ENCODE measurements at regions of chr3 and their contacts with region 1.

Region 1: DNA sequence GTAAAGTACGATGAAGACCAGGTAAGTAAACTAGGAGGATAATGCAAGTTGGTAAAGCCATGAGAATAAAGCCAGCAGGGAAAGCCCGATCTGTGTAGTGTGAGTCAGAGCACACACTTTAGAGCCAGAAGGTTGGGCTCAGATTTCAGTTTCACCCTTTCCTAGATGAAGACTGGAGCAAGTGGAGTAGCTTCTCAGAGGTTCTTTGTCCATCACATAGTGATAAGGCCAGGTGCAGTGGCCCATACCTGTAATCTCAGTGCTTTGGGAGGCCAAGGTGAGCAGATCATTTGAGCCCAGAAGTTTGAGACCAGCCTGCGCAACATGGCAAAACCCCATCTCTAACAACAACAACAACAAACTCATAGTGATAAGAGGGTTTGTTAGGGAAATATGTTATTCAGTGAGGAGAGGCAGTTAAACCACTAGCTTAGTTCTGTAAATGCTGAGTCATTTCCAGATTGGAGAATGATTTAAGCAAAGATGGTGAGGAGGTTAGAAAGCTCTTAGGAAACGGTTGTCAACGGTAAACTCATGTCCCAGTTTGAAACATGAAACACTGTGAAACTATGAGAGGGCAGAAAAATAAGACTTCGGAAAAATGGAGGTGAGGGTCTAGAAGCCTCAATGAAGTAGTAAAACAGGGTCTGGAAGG is 39.0 kb downstream of the IL12A start:
- DNase-seq: peak; percentile 40
- H3K4me3 Mint-ChIP-seq: no peak overlapping the region
- H3K27ac Mint-ChIP-seq: peak overlapping the region; percentile 17
- H3K4me1 Mint-ChIP-seq: peaks cover 25% of the 10 kb centered on the region
- H3K27me3 Mint-ChIP-seq: no peaks in the 10 kb centered on the region
- CTCF ChIP-seq: no peak

Region 2: GRCh38 chr3:160129459-160130061 is 101.9 kb after region 1 on chr3:
- CTCF ChIA-PET with region 1: interaction called, 31 read pairs
- intact Hi-C with region 1: loop called (anchors 1 kb)
- DNase-seq: no peak
- H3K4me3 Mint-ChIP-seq: peak overlapping the region; percentile 3
- H3K27ac Mint-ChIP-seq: peak overlapping the region; percentile 75
- H3K4me1 Mint-ChIP-seq: peaks cover 62% of the 10 kb centered on the region
- H3K27me3 Mint-ChIP-seq: no peaks in the 10 kb centered on the region
- CTCF ChIP-seq: no peak

Region 3: GRCh38 chr3:160163229-160163878 is 135.7 kb after region 1 on chr3:
- CTCF ChIA-PET with region 1: interaction called, 21 read pairs
- intact Hi-C with region 1: loop called (anchors 1 kb)
- DNase-seq: peak; percentile 27
- H3K4me3 Mint-ChIP-seq: no peak overlapping the region
- H3K27ac Mint-ChIP-seq: no peak overlapping the region
- H3K4me1 Mint-ChIP-seq: peaks cover 8% of the 10 kb centered on the region
- H3K27me3 Mint-ChIP-seq: no peaks in the 10 kb centered on the region
- CTCF ChIP-seq: no peak

Region 4: DNA sequence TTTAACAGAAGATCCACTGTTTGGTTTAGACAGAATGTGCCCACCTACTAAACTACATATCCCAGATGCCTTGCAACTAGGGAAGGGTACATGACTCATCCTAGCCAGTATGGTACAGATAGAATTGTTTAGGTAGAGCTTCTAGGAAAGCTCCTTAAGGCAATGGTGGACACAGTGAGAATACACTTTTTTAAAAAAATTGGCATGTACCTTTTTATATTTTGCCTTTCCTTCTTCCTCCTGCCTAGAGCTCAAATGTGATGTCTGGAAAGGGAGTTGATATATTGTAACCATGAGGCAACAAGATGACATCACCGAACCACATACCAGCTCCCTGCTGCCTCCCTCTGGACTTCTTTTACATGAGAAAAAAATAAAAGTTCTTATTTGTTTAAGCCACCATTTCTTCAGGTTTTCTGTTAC is 183.1 kb after region 1 on chr3:
- CTCF ChIA-PET with region 1: interaction called, 17 read pairs
- intact Hi-C with region 1: loop called (anchors 1 kb)
- DNase-seq: peak; percentile 34
- H3K4me3 Mint-ChIP-seq: no peak overlapping the region
- H3K27ac Mint-ChIP-seq: peak overlapping the region; percentile 31
- H3K4me1 Mint-ChIP-seq: no peaks in the 10 kb centered on the region
- H3K27me3 Mint-ChIP-seq: peaks cover 8% of the 10 kb centered on the region
- CTCF ChIP-seq: peak; percentile 45

Region 5: DNA sequence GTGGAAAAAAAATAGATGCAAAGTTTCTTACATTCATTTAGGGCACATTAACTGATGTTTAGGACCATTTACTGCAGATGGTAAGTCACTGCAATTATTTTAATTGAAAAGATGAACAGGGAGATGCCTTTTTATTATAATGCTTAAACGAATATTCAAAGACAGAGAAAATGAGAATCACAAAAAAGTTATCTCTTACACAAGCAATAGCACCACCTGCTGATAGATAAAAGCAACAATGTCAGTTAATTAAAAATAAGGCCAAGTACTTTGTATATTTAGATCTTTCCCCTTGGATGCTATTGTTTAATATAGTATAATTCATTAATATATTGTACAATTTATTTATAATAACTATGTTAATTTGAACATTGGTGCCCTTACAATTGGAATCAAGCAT is 315.5 kb after region 1 on chr3:
- CTCF ChIA-PET with region 1: no interaction called
- intact Hi-C with region 1: loop called (anchors 1 kb)
- DNase-seq: no peak
- H3K4me3 Mint-ChIP-seq: no peak overlapping the region
- H3K27ac Mint-ChIP-seq: no peak overlapping the region
- H3K4me1 Mint-ChIP-seq: no peaks in the 10 kb centered on the region
- H3K27me3 Mint-ChIP-seq: no peaks in the 10 kb centered on the region
- CTCF ChIP-seq: peak; percentile 46

Region 6: DNA sequence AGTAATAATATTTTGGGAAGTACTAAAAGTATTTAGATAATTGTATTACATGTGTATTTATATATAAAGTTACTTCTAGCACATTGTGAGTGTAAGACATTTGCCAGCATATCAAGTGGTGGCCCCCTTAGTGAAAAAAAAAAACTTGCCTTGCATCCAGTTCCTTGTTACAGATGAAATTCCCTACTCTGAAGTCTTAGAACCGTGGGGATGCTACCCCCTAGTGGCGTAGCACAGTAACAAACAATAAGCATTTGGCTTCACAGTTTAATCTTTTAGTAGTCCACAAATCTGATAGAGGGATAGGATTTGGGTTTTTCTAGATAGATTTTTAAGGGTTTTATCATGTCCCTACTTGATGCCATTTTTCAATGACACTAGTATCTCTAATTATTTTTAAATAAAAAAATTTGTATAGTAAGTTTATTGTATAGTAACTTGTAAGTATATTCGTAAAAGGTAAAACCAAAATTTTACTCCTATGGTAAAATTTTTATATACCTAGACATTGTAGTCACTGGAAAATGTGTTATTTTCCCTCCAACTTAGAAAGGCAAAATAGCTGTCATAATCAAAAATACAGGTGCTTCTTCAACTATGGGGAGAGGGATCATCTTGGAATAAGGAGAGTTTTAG is 386.1 kb after region 1 on chr3:
- CTCF ChIA-PET with region 1: no interaction called
- intact Hi-C with region 1: loop called (anchors 1 kb)
- DNase-seq: peak; percentile 89
- H3K4me3 Mint-ChIP-seq: no peak overlapping the region
- H3K27ac Mint-ChIP-seq: no peak overlapping the region
- H3K4me1 Mint-ChIP-seq: peaks cover 27% of the 10 kb centered on the region
- H3K27me3 Mint-ChIP-seq: no peaks in the 10 kb centered on the region
- CTCF ChIP-seq: peak; percentile 89

Region 7: GRCh38 chr3:160486459-160486869 is 458.8 kb after region 1 on chr3:
- CTCF ChIA-PET with region 1: interaction called, 4 read pairs
- intact Hi-C with region 1: loop called (anchors 1 kb)
- DNase-seq: peak; percentile 19
- H3K4me3 Mint-ChIP-seq: peak overlapping the region; percentile 70
- H3K27ac Mint-ChIP-seq: no peak overlapping the region
- H3K4me1 Mint-ChIP-seq: peaks cover 12% of the 10 kb centered on the region
- H3K27me3 Mint-ChIP-seq: no peaks in the 10 kb centered on the region
- CTCF ChIP-seq: peak; percentile 73